Astrocyte of the cerebellum (primary cell): ENCODE measurements at regions of chr16 and their contacts with region 1.

Region 1: DNA sequence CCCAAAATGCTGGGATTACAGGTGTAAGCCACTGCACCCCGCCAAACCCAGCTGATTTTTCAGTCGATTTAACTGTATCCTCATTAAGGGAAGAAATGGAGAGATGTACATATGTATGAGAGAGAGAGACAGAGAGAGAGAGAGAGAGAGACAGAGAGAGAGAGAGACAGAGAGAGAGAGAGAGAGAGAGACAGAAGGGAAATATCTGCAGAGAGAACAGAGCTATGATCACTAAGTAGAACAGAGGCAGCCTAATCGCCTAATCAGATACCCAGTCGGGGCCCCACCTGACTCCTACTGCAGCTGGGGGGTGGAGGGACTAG is 70.0 kb downstream of the RBBP6 start:
- DNase-seq: no peak
- H3K4me3 ChIP-seq: no peak overlapping the region
- CTCF ChIP-seq: no peak

Region 2: GRCh38 chr16:24652209-24652712 is 42.9 kb after region 1 on chr16:
- in situ Hi-C with region 1: no loop called
- DNase-seq: no peak
- H3K4me3 ChIP-seq: no peak overlapping the region
- CTCF ChIP-seq: no peak

Region 3: GRCh38 chr16:24681809-24682511 is 72.6 kb after region 1 on chr16:
- in situ Hi-C with region 1: loop called (anchors 5 kb)
- DNase-seq: no peak
- H3K4me3 ChIP-seq: no peak overlapping the region
- CTCF ChIP-seq: no peak

Region 4: GRCh38 chr16:25060920-25061319 is 451.5 kb after region 1 on chr16:
- in situ Hi-C with region 1: no loop called
- DNase-seq: no peak
- H3K4me3 ChIP-seq: no peak overlapping the region
- CTCF ChIP-seq: no peak